ENCODE measurements at regions of chr13 and their contacts with region 1.

Region 1: GRCh38 chr13:30292325-30292724 is 15.0 kb downstream of the KATNAL1 start:
- DNase-seq: no peak
- ATAC-seq: no peak
- H3K4me3 ChIP-seq: no peak overlapping the region
- H3K4me3 Mint-ChIP-seq: no peak overlapping the region
- H3K27ac ChIP-seq: no peak overlapping the region
- H3K27ac Mint-ChIP-seq: no peak overlapping the region
- H3K4me1 ChIP-seq: no peaks in the 10 kb centered on the region
- H3K4me1 Mint-ChIP-seq: peaks cover 4 to 17% (median 8%) of the 10 kb centered on the region in 7 donors
- H3K27me3 ChIP-seq: no peaks in the 10 kb centered on the region
- H3K27me3 Mint-ChIP-seq: peaks cover 0 to 19% (median 0%) of the 10 kb centered on the region in 5 donors

Region 2: GRCh38 chr13:29884671-29885430 is 407.5 kb before region 1 on chr13:
- CTCF ChIA-PET with region 1: no interaction called
- POLR2A ChIA-PET with region 1: no interaction called
- intact Hi-C with region 1: no loop called
- DNase-seq: no peak
- ATAC-seq: no peak
- H3K4me3 ChIP-seq: no peak overlapping the region
- H3K4me3 Mint-ChIP-seq: no peak overlapping the region
- H3K27ac ChIP-seq: no peak overlapping the region
- H3K27ac Mint-ChIP-seq: peak overlapping the region in 1 of 9 donors; percentile 84
- H3K4me1 ChIP-seq: no peaks in the 10 kb centered on the region
- H3K4me1 Mint-ChIP-seq: peaks cover 0 to 22% (median 0%) of the 10 kb centered on the region in 7 donors
- H3K27me3 ChIP-seq: no peaks in the 10 kb centered on the region
- H3K27me3 Mint-ChIP-seq: peaks cover 0 to 9% (median 0%) of the 10 kb centered on the region in 5 donors

Region 3: GRCh38 chr13:30257468-30258099 is 34.7 kb before region 1 on chr13:
- CTCF ChIA-PET with region 1: no interaction called
- POLR2A ChIA-PET with region 1: no interaction called
- intact Hi-C with region 1: loop called in 1 of 2 experiments (anchors 5 kb)
- DNase-seq: no peak
- ATAC-seq: no peak
- H3K4me3 ChIP-seq: no peak overlapping the region
- H3K4me3 Mint-ChIP-seq: no peak overlapping the region
- H3K27ac ChIP-seq: no peak overlapping the region
- H3K27ac Mint-ChIP-seq: peak overlapping the region in 2 of 9 donors; percentile 18 to 62
- H3K4me1 ChIP-seq: no peaks in the 10 kb centered on the region
- H3K4me1 Mint-ChIP-seq: peaks cover 0 to 21% (median 14%) of the 10 kb centered on the region in 7 donors
- H3K27me3 ChIP-seq: no peaks in the 10 kb centered on the region
- H3K27me3 Mint-ChIP-seq: no peaks in the 10 kb centered on the region

Measured in naive thymus-derived CD4-positive, alpha-beta T cell (primary cell).